Calu3 (cell line): ENCODE measurements at regions of chr5 and their contacts with region 1.

Region 1: GRCh38 chr5:40841068-40841805 is at the start of gene CARD6:
- DNase-seq: peak; percentile 30
- H3K4me3 Mint-ChIP-seq: peak within 1 kb of the TSS; percentile 83
- H3K27ac Mint-ChIP-seq: peak within 1 kb of the TSS; percentile 97
- H3K4me1 Mint-ChIP-seq: peaks cover 30% of the 10 kb centered on the region
- H3K27me3 Mint-ChIP-seq: no peaks in the 10 kb centered on the region
- CTCF ChIP-seq: no peak
- total RNA-seq, gene CARD6: 5.9 and 8.2 TPM in 2 replicates

Region 2: DNA sequence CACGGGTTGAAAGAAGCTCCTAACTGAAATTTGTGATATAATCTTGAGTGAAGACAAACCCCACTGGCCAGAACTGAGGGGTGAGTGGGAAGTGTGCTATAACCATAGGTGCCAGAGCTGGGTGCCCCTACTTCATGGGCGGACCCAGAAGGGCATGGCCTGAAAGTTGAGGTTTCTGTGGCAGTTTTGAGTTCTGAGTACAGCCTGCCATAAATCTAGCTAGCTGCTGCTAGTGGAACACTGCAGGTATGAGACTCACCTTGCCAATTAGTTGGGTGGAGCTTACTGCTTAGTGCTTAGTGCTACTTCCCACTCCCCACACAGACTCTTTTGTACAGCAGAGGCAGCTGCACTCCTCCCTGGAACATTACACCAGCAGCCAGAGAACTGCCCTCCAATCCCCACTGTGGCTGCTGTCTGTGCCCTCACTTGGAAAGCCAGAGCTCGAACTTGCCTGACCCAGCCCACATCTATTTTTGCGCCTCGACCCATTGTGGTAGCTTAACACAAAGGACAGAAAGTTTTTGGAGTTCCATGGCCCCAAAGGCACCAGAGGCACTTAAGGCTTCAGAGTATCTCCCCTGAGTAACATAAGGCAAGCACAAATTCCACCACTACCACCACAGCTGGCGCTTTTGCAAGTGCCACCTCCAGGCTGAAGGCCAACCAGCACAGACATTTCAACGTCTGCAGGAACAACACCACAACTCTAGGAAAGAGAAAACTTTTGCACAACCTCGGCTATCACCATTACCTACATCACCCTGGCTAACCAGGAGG is 188.6 kb before region 1 on chr5:
- CTCF ChIA-PET with region 1: no interaction called
- intact Hi-C with region 1: no loop called
- DNase-seq: no peak
- H3K4me3 Mint-ChIP-seq: no peak overlapping the region
- H3K27ac Mint-ChIP-seq: no peak overlapping the region
- H3K4me1 Mint-ChIP-seq: no peaks in the 10 kb centered on the region
- H3K27me3 Mint-ChIP-seq: no peaks in the 10 kb centered on the region
- CTCF ChIP-seq: no peak

Region 3: DNA sequence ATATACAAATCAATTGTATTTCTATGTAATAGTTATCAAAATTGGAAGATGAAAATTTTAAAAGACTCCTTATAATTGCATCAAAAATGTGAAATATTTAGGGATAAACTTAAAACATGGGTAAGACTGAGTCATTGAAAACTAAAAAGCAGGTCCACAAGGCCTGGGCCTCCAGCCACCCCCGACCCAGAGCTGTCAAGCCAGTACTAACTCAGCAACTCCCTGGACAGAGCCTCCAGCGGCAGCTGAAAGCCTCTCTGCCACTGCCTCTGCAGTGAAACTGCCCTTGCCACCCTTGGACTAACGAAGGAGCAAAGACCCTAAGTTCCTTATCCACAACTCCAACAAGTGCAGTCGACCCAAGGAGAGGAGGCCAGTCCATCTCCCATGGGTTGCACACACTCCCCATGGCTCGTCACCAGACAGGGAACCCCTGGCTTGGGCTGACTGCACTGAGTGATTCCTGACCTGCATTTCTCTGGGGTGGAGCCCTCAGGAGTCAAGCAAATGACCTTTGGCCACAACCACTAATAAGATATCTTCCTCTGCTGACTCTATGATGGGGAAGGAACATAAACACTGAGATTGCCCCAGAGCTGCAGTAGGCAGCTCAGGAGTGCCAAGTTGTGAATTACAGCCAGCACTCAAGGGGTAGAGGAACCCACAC is 141.0 kb before region 1 on chr5:
- CTCF ChIA-PET with region 1: no interaction called
- intact Hi-C with region 1: no loop called
- DNase-seq: no peak
- H3K4me3 Mint-ChIP-seq: no peak overlapping the region
- H3K27ac Mint-ChIP-seq: no peak overlapping the region
- H3K4me1 Mint-ChIP-seq: no peaks in the 10 kb centered on the region
- H3K27me3 Mint-ChIP-seq: no peaks in the 10 kb centered on the region
- CTCF ChIP-seq: no peak

Region 4: GRCh38 chr5:40755407-40756365 is 85.6 kb before region 1 on chr5 and contains the start of gene TTC33:
- CTCF ChIA-PET with region 1: no interaction called
- intact Hi-C with region 1: loop called (anchors 2 kb)
- DNase-seq: peak; percentile 95
- H3K4me3 Mint-ChIP-seq: no peak within 1 kb of the TSS
- H3K27ac Mint-ChIP-seq: no peak within 1 kb of the TSS
- H3K4me1 Mint-ChIP-seq: no peaks in the 10 kb centered on the region
- H3K27me3 Mint-ChIP-seq: no peaks in the 10 kb centered on the region
- CTCF ChIP-seq: peak; percentile 45
- total RNA-seq, gene TTC33: 11.3 and 14.0 TPM in 2 replicates

Region 5: DNA sequence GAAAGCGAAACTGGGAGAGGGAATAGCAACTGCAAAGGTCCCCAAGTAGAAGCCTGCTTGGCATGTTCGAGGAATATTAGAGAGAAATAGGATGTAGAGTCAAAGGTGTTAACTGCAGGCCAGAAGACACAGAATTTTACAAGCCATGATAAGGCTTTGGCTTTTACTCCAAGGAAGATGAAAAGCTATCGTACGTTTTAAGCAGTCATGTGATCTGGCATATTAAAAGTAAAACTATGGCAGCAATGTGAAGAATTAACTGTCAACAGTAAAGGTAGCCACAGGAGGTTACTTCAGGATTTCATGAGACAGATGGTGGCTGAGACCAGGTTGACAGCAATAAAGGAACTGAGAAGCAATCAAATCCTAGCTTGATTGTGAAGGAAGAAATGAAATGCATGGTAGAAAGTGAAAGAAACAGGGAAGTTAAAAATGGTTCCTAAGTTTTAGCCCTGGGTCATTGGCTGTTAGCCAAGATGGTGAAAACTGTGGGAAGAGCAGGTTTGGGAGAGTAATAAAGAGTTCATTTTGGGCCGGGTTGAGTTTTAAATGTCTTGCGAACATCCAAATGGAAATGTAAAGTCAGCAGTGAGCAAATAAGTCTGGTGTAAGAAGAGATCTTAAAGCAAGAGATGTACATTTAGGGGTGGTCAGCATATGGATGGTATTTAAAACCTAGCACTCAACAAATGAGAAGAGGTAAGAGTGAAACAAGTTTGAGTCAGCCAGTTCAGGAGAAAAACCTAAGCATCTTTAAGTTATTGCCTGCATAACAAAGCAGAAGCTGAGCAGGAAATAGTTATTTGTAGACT is 65.2 kb before region 1 on chr5:
- CTCF ChIA-PET with region 1: no interaction called
- intact Hi-C with region 1: loop called (anchors 5 kb)
- DNase-seq: no peak
- H3K4me3 Mint-ChIP-seq: peak overlapping the region; percentile 48
- H3K27ac Mint-ChIP-seq: peak overlapping the region; percentile 63
- H3K4me1 Mint-ChIP-seq: peaks cover 28% of the 10 kb centered on the region
- H3K27me3 Mint-ChIP-seq: no peaks in the 10 kb centered on the region
- CTCF ChIP-seq: no peak

Region 6: GRCh38 chr5:40790947-40791593 is 50.2 kb before region 1 on chr5:
- CTCF ChIA-PET with region 1: no interaction called
- intact Hi-C with region 1: no loop called
- DNase-seq: no peak
- H3K4me3 Mint-ChIP-seq: peak overlapping the region; percentile 33
- H3K27ac Mint-ChIP-seq: peak overlapping the region; percentile 70
- H3K4me1 Mint-ChIP-seq: peaks cover 15% of the 10 kb centered on the region
- H3K27me3 Mint-ChIP-seq: no peaks in the 10 kb centered on the region
- CTCF ChIP-seq: no peak